GM18951 (cell line): ENCODE measurements at regions of chr6 and their contacts with region 1.

Region 1: DNA sequence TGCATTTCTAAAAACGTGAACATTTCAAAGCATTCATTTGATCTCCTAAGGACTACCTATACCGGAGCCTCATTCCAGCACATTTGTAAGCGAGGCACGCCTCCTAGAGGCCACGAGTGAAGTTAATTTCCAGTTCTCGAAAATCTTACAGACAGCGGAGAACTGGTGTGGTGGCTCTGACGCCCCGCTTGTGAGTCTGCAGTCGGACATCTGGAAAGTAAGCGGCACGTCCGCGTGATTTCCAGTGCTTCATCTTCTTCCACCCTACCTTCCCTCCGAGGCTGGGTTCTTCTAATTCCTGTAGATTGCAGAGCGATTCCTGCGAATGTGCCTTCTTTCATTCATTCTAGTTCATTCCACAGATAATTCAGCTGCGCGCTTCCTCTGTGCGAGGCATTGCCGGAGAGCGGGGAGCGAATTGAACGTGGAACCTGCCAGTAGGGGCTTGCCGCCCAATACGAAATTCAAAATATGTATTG is 810 bp upstream of the PRIM2 start:
- POLR2A ChIP-seq: peak; percentile 52

Region 2: GRCh38 chr6:56902641-56903464 is 413.8 kb before region 1 on chr6:
- in situ Hi-C with region 1: loop called (anchors 10 kb)
- POLR2A ChIP-seq: no peak

Region 3: GRCh38 chr6:57040009-57040408 is 276.6 kb before region 1 on chr6:
- in situ Hi-C with region 1: loop called (anchors 25 kb)
- POLR2A ChIP-seq: no peak

Region 4: DNA sequence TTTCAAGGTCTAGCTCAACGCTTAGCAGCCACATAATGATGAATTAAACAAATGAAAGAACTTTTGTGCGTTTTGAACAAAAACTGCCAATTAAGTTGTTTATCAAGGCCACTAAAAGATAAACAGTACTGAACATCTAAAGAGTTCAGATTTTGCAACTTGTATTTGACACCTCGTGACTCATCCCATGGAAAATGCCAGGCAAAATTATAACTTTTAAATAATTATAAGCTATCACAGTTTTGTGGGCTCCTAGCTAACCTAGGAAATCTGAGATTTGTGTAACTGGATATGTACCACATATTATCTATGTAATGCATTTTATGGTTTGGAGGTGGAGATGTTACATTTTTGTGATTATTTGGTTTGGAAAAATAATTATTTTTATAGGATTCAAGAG is 154.1 kb before region 1 on chr6:
- in situ Hi-C with region 1: no loop called
- POLR2A ChIP-seq: no peak